ENCODE measurements at regions of chr3 and their contacts with region 1.

Region 1: GRCh38 chr3:46276502-46277099 is 34.3 kb downstream of the CCR3 start:
- DNase-seq: peak; percentile 86
- ATAC-seq: peak; percentile 81
- H3K4me3 Mint-ChIP-seq: no peak overlapping the region
- H3K27ac Mint-ChIP-seq: no peak overlapping the region
- H3K4me1 Mint-ChIP-seq: peaks cover 33% of the 10 kb centered on the region
- H3K27me3 Mint-ChIP-seq: peaks cover 31% of the 10 kb centered on the region

Region 2: DNA sequence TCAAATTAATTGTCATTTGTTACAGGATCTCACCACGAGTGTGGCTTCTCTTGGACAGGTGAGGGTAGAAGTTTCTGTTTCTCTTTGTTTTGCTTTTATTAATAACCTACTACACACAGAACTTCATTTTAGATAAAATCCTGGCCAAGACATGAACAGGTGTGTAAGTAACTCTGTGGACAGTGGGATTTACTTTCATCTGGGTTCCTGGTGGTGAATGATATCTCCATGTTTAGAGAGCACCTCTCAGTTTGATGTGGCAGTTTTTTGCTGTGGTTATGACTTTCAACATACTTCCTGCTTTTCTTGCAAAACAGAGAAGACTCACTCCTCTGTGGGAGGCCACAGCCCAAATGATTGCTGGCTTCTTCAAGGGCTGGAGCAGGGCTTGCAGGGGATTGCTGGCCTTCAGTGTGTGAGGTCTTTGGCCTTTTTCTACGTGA is 178.3 kb before region 1 on chr3:
- CTCF ChIA-PET with region 1: interaction called, 3 read pairs
- POLR2A ChIA-PET with region 1: no interaction called
- intact Hi-C with region 1: loop called in 1 of 2 experiments (anchors 5 kb)
- DNase-seq: peak; percentile 73
- ATAC-seq: peak; percentile 76
- H3K4me3 Mint-ChIP-seq: no peak overlapping the region
- H3K27ac Mint-ChIP-seq: peak overlapping the region; percentile 62
- H3K4me1 Mint-ChIP-seq: peaks cover 31% of the 10 kb centered on the region
- H3K27me3 Mint-ChIP-seq: peaks cover 51% of the 10 kb centered on the region

Region 3: GRCh38 chr3:46266598-46266997 is 10.0 kb before region 1 on chr3:
- CTCF ChIA-PET with region 1: interaction called, 15 read pairs
- POLR2A ChIA-PET with region 1: interaction called, 4 read pairs
- intact Hi-C with region 1: no loop called
- DNase-seq: no peak
- ATAC-seq: no peak
- H3K4me3 Mint-ChIP-seq: no peak overlapping the region
- H3K27ac Mint-ChIP-seq: no peak overlapping the region
- H3K4me1 Mint-ChIP-seq: peaks cover 20% of the 10 kb centered on the region
- H3K27me3 Mint-ChIP-seq: peaks cover 26% of the 10 kb centered on the region

Region 4: DNA sequence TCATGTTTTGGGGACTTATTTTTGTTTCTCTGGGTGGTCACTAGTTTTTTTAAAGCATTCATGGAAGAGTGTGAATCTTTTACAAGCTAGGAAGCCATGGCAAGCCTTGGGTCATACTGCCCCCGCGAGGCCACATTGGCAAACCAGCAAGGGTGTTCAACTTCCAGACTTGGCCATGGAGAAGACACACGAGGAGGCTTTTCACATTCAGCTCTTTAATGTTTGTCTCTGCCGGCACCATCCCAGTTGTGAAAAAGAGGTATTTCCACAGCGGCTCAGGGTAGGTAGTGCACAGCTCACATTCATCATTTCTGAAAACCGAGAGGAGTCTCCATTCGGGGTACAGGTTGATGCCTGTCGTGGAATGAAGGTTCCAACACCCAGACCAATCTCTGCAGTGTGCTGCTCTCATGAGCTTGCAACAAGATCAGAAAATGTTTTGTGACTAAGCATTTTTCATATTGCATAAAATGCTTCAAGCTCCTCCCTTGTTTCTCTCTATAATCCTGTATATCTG is 101.9 kb after region 1 on chr3:
- CTCF ChIA-PET with region 1: interaction called, 10 read pairs
- POLR2A ChIA-PET with region 1: no interaction called
- intact Hi-C with region 1: no loop called
- DNase-seq: peak; percentile 84
- ATAC-seq: peak; percentile 53
- H3K4me3 Mint-ChIP-seq: no peak overlapping the region
- H3K27ac Mint-ChIP-seq: no peak overlapping the region
- H3K4me1 Mint-ChIP-seq: peaks cover 28% of the 10 kb centered on the region
- H3K27me3 Mint-ChIP-seq: peaks cover 22% of the 10 kb centered on the region